OCI-LY7 (cell line): ENCODE measurements at regions of chr5 and their contacts with region 1.

Region 1: DNA sequence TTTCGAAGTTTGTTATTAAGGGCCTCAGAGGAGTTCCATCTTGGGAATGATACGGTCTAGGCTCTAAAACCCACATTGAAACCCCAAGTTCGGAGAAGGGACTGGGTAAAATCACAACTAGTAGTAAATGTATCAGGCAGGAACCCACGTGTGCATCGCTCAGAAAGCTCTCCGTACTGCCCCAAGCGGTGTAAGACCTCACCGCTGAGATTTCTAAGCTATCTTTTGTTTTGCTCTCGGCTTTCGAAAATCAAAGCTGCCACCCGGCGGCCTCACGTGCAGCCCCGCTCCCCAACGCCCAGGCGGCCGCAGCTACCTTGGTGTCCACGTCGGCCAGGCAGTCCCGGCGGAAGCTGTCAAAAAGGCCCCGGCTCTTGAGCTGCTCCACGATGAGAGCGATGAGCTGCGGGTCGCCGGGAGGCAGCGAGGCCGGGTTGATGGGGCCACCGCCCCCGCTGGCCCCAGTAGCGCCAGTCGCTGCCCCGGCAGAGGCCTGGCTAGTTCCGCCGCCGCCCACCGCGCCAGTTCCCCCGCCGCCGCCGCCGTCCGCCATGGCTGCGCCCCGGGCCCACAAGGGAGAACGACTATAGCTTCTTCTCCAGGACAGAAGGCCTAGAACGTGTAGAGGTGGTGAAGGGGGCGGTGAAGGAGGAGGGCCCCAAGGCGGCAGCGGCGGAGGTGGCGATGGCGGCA is 420 bp downstream of the BOD1 start:
- DNase-seq: peak; percentile 88
- H3K4me3 ChIP-seq: peak overlapping the region; percentile 97
- H3K27ac ChIP-seq: peak overlapping the region; percentile 76
- H3K4me1 ChIP-seq: peaks cover 39% of the 10 kb centered on the region
- CTCF ChIP-seq: peak; percentile 85

Region 2: DNA sequence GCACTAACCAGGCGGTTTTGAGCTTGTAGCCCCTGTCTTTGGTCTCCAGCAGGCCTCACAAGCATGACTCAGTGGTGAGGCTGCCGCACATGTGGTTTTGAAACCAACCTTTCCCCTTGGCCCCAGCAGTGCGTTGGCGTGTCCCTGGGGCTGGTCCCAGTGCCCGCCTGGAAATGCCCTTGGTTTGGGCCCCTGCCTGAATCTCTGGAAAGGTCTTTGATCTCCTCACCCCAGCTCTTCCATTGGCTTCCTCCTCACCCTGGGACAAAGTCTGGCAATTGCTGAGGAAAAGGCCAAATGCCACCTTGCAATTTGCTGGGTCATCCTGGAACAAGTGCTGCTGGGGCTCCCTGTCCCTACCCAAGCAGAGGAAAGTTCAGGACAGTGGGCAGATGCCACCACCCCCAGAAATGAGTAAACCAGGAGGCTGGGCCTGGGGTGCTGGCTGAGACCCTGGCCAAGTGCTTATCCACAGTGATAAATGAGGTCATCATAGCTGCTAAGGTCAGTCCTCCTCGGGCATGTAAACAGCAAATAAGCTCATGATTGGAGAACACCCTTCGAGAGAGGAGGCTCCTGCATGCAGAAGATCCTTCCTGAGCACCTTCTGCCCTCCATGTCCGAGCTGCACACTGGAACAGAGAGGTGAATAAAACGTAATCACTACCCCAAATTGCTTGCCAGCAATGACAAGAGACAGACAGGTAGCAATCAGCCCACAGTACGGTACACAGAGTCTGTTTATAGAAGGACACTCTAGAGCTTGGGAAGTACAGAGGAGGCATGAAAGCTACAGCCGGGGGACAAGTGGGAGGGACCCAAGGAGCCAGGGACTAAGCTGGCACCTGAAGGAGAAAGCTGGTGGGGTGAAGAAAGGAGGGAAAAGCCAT is 173.2 kb after region 1 on chr5:
- CTCF ChIA-PET with region 1: no interaction called
- POLR2A ChIA-PET with region 1: no interaction called
- intact Hi-C with region 1: loop called (anchors 2 kb)
- DNase-seq: peak; percentile 31
- H3K4me3 ChIP-seq: no peak overlapping the region
- H3K27ac ChIP-seq: no peak overlapping the region
- H3K4me1 ChIP-seq: peaks cover 63% of the 10 kb centered on the region
- CTCF ChIP-seq: no peak

Region 3: GRCh38 chr5:173823711-173824528 is 207.9 kb after region 1 on chr5:
- CTCF ChIA-PET with region 1: interaction called, 4 read pairs
- POLR2A ChIA-PET with region 1: interaction called, 4 read pairs
- intact Hi-C with region 1: loop called (anchors 10 kb)
- DNase-seq: no peak
- H3K4me3 ChIP-seq: peak overlapping the region; percentile 27
- H3K27ac ChIP-seq: peak overlapping the region; percentile 99
- H3K4me1 ChIP-seq: peaks cover 84% of the 10 kb centered on the region
- CTCF ChIP-seq: no peak

Region 4: GRCh38 chr5:173884402-173885061 is 268.5 kb after region 1 on chr5:
- CTCF ChIA-PET with region 1: no interaction called
- POLR2A ChIA-PET with region 1: no interaction called
- intact Hi-C with region 1: no loop called
- DNase-seq: peak; percentile 52
- H3K4me3 ChIP-seq: peak overlapping the region; percentile 5
- H3K27ac ChIP-seq: peak overlapping the region; percentile 35
- H3K4me1 ChIP-seq: peaks cover 46% of the 10 kb centered on the region
- CTCF ChIP-seq: no peak

Region 5: DNA sequence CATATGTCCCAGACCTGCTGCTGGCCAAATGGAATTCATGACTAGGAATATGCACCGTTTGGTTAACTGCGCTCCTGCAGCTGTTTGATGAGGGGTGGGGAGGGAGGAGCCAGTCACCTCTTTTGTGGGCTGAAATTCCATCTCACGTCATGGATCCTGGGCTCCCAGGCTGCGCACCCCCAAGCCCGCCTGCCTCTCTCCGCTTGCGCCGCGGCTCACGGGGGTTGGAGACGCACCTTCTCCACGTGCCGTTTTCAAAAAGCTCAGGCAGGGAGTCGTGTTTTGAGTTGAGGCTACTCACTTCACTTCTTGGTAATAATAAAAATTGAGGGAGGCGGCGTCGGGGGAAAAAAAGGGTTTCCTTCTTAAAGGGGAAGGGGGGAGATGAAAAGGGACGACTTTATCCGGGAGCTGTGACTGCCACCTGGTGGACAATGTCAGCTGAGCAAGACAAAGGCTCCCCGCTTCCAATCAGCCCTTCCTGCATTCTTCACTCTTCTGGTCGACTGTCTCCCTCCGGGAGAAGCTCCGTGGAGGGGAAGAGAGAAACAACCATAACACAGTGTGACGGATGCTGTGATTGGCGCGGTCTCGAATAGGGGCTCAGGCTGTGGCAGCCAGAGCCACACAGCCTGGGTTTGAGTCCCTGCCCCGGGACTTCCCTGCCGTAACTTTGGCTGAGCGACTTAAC is 357.0 kb after region 1 on chr5:
- CTCF ChIA-PET with region 1: interaction called, 13 read pairs
- POLR2A ChIA-PET with region 1: interaction called, 26 read pairs
- intact Hi-C with region 1: loop called (anchors 1 kb)
- DNase-seq: peak; percentile 85
- H3K4me3 ChIP-seq: peak overlapping the region; percentile 51
- H3K27ac ChIP-seq: no peak overlapping the region
- H3K4me1 ChIP-seq: peaks cover 29% of the 10 kb centered on the region
- CTCF ChIP-seq: peak; percentile 95

Region 6: GRCh38 chr5:174097518-174098185 is 481.6 kb after region 1 on chr5:
- CTCF ChIA-PET with region 1: no interaction called
- POLR2A ChIA-PET with region 1: no interaction called
- intact Hi-C with region 1: loop called (anchors 10 kb)
- DNase-seq: no peak
- H3K4me3 ChIP-seq: peak overlapping the region; percentile 20
- H3K27ac ChIP-seq: peak overlapping the region; percentile 73
- H3K4me1 ChIP-seq: peaks cover 76% of the 10 kb centered on the region
- CTCF ChIP-seq: no peak

Region 7: DNA sequence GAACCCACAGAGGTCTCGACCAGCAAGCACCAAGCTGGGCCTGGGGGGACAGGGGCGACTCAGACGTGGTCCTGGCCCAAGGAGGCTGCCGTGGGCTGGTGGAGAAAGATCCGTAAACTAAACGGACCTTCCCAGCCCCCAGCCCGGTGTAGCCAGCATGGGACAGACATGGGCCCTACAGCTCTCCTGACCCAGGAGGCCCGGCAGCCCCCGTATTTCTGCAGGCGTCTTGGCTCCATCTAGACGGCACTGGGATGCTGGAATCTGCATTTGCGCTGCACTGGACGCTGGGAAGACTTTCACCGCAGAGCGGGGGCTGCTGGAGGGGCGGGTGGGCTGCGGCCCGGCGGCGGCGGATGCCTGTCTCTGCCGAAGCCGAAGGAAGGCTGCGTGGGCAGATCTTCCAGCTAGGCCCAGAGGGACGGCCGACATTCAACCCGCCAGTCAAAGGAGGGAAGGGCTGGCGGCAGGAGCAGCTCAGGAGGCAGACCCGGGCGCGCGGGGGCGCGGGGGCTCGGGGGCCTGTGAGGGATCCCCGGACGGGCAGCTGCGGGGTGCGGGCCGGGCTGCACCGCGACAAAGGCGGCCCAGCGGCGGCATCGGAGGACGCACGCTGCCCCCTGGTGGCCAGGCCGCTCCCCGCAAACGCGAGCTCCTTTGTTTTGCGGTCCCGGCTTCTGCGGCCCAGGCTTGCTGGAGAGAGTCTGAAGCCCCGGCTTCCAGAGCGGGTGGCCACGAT is 695.7 kb after region 1 on chr5:
- CTCF ChIA-PET with region 1: interaction called, 4 read pairs
- POLR2A ChIA-PET with region 1: no interaction called
- intact Hi-C with region 1: loop called (anchors 10 kb)
- DNase-seq: peak; percentile 27
- H3K4me3 ChIP-seq: no peak overlapping the region
- H3K27ac ChIP-seq: no peak overlapping the region
- H3K4me1 ChIP-seq: no peaks in the 10 kb centered on the region
- CTCF ChIP-seq: peak; percentile 76